Panc1 (cell line): ENCODE measurements at regions of chr11 and their contacts with region 1.

Region 1: DNA sequence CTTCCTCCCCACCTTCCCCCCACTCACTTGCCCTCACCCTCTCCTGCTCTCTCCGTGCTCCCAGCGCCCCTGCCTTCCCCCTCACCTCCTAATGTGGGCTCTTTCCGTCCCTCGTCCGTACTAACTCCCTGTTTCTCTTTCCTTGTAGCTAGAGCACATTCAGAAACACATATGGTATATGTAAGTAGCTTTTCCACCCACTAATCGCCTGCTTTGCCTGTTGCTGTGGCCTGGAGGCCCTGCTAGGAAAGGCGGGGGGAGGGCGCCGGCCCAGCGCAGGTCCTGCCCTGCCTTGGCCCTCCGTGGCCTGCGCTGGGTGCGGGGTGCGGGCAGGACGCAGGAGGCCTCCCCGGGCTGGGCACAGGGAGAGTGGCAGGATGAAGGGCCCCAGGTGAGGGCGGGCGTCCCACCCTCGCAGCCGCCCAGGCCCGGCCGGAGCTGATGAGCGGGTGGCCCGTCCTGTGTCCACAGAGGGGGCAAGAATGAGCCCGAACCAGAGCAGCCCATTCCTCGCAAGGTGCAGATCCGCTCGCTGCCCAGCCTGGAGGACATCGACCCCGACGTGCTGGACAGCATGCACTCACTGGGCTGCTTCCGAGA is 41.7 kb downstream of the MOB2 start:
- DNase-seq: no peak
- ATAC-seq: no peak
- H3K4me3 ChIP-seq: no peak overlapping the region
- H3K27ac ChIP-seq: no peak overlapping the region
- H3K4me1 ChIP-seq: peaks cover 15% of the 10 kb centered on the region
- H3K27me3 ChIP-seq: no peaks in the 10 kb centered on the region
- CTCF ChIP-seq: no peak

Region 2: GRCh38 chr11:865462-866430 is 579.2 kb before region 1 on chr11:
- CTCF ChIA-PET with region 1: no interaction called
- POLR2A ChIA-PET with region 1: interaction called, 13 read pairs
- in situ Hi-C with region 1: no loop called
- intact Hi-C with region 1: no loop called
- DNase-seq: no peak
- ATAC-seq: peak; percentile 4
- H3K4me3 ChIP-seq: no peak overlapping the region
- H3K27ac ChIP-seq: peak overlapping the region; percentile 21; the same call in 1 of the 2 replicates
- H3K4me1 ChIP-seq: peaks cover 66% of the 10 kb centered on the region
- H3K27me3 ChIP-seq: no peaks in the 10 kb centered on the region
- CTCF ChIP-seq: no peak

Region 3: GRCh38 chr11:1682225-1682905 is 237.4 kb after region 1 on chr11:
- CTCF ChIA-PET with region 1: no interaction called
- POLR2A ChIA-PET with region 1: no interaction called
- in situ Hi-C with region 1: no loop called
- intact Hi-C with region 1: no loop called
- DNase-seq: peak; percentile 18
- ATAC-seq: peak; percentile 58
- H3K4me3 ChIP-seq: no peak overlapping the region
- H3K27ac ChIP-seq: peak overlapping the region; percentile 10
- H3K4me1 ChIP-seq: peaks cover 11% of the 10 kb centered on the region
- H3K27me3 ChIP-seq: no peaks in the 10 kb centered on the region
- CTCF ChIP-seq: no peak